ENCODE measurements at regions of chr15 and their contacts with region 1.

Region 1: GRCh38 chr15:26260517-26261133 is 397.5 kb upstream of the ATP10A start:
- DNase-seq: no peak
- H3K4me3 ChIP-seq: no peak overlapping the region
- H3K27ac ChIP-seq: no peak overlapping the region
- H3K4me1 ChIP-seq: no peaks in the 10 kb centered on the region
- H3K27me3 ChIP-seq: peaks cover 0 to 6% of the 10 kb centered on the region in 2 donors
- CTCF ChIP-seq: peak; percentile 71 to 78

Region 2: DNA sequence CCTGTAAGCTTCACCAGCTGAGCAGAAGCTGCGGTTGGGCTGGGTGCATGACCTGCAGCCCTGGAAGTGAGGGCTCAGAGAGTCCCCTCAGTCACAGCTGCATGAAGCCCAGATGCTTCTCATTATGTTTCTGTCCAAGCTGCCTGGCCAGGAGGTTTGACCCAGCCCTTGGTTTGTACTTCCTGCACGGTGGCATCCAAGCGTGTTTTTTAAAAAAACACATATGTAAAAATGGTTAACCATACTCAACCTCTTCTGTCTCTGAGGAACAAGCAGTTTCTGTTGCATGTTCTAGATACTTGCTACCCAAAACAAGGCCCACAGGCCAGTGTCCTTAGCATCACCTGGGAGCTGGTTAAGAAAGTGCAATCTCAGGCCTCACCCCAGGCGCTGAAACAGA is 321.5 kb before region 1 on chr15:
- intact Hi-C with region 1: no loop called
- DNase-seq: no peak
- H3K4me3 ChIP-seq: no peak overlapping the region
- H3K27ac ChIP-seq: no peak overlapping the region
- H3K4me1 ChIP-seq: peaks cover 0 to 4% (median 0%) of the 10 kb centered on the region in 4 donors
- H3K27me3 ChIP-seq: no peaks in the 10 kb centered on the region
- CTCF ChIP-seq: no peak

Region 3: GRCh38 chr15:25954398-25954797 is 306.2 kb before region 1 on chr15:
- intact Hi-C with region 1: loop called (anchors 10 kb)
- DNase-seq: no peak
- H3K4me3 ChIP-seq: no peak overlapping the region
- H3K27ac ChIP-seq: no peak overlapping the region
- H3K4me1 ChIP-seq: no peaks in the 10 kb centered on the region
- H3K27me3 ChIP-seq: peaks cover 0 to 3% of the 10 kb centered on the region in 2 donors
- CTCF ChIP-seq: no peak

Region 4: GRCh38 chr15:26325495-26325894 is 64.9 kb after region 1 on chr15:
- intact Hi-C with region 1: no loop called
- DNase-seq: no peak
- H3K4me3 ChIP-seq: no peak overlapping the region
- H3K27ac ChIP-seq: no peak overlapping the region
- H3K4me1 ChIP-seq: no peaks in the 10 kb centered on the region
- H3K27me3 ChIP-seq: no peaks in the 10 kb centered on the region
- CTCF ChIP-seq: no peak